ENCODE measurements at regions of chr19 and their contacts with region 1.

Region 1: DNA sequence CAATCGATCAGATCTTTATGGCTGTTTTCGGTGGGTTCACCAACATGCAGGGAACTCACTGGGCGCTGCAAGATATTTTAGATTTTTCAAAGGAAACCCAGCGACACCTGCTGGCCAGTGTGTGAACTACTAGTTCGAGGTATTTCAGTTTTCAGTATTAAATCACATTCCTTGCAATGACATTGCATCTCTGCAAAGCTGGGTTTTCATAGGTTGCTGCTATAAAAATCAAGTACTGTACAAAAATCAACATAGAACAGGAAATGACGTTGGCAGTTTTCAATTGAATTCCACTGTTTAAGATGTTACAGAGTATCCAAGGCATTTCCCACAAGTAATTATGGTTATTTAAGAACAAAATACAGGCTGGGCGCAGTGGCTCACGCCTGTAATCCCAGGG is 17.6 kb downstream of the LIG1 start:
- DNase-seq: peak; percentile 48 to 52
- ATAC-seq: peak in 5 of 8 donors; percentile 47 to 70 (median 62)
- H3K4me3 ChIP-seq: no peak overlapping the region
- H3K27ac ChIP-seq: peak overlapping the region in 2 of 10 donors; percentile 7 to 9
- H3K4me1 ChIP-seq: peaks cover 0 to 3% (median 0%) of the 10 kb centered on the region in 9 donors
- H3K27me3 ChIP-seq: no peaks in the 10 kb centered on the region
- CTCF ChIP-seq: peak; percentile 79 to 90 (median 84)

Region 2: DNA sequence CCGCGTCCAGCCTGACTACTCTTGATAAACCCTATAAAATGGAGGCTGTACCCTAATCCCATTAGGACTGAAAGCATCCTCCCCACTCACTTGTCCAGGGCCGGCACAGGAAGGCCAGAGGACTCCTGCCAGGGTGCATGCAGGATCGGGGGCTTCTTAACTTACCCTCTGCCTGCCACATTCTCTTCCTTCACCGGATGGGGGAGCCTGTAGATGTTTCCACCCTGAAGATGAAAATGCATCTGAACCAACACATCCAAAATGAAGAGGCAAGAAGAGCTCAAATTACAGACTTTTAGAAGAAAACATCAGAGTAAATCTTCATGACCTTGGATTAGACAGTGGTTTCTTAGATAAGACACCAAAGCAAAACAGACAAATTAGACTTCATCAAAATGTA is 611.8 kb before region 1 on chr19:
- intact Hi-C with region 1: no loop called
- DNase-seq: no peak
- ATAC-seq: no peak
- H3K4me3 ChIP-seq: no peak overlapping the region
- H3K27ac ChIP-seq: peak overlapping the region in 1 of 10 donors; percentile 78
- H3K4me1 ChIP-seq: peaks cover 0 to 20% (median 6%) of the 10 kb centered on the region in 9 donors
- H3K27me3 ChIP-seq: peaks cover 9 to 29% (median 15%) of the 10 kb centered on the region in 7 donors
- CTCF ChIP-seq: peak in 4 of 9 donors; percentile 8 to 22 (median 14)

Region 3: DNA sequence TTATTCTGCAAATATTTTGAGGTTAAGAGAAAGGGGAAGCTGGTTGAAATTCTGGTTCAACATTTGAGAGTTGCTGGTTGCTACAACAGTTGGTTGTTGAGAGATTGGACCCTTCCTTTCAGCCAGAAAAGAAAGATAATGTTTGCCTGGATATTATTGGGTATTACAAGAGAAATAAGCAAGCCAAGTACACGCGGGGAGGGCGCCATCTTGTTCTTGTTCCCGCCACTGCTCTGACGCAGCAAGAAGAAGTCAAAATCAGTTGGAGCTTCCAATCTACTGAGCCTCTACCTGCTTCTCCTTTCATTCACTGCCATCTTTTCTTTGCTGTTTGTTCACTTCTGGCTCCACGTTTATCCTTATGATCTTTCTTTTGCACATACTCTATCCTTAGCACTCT is 179.0 kb before region 1 on chr19:
- intact Hi-C with region 1: loop called in 2 of 10 experiments (anchors 5 kb)
- DNase-seq: no peak
- ATAC-seq: no peak
- H3K4me3 ChIP-seq: no peak overlapping the region
- H3K27ac ChIP-seq: no peak overlapping the region
- H3K4me1 ChIP-seq: no peaks in the 10 kb centered on the region
- H3K27me3 ChIP-seq: peaks cover 0 to 48% (median 27%) of the 10 kb centered on the region in 7 donors
- CTCF ChIP-seq: no peak

Region 4: DNA sequence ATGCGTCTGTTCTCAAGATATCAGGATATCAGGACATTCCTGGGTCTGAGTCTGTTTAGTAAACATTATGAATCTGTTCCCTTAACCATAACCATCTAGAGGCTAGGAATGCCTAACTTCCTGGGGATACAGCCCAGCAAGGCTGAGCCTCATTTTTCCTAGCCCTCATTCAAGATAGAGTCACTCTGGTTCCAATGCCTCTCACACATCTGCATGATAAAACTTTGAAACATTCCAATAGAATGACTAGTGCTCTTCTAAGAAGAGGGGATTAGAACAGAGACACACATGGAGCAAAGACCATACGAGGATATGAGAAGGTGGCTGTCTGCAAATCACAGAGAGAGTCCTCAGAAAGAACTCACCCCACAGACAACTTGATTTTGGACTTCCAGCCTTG is 88.0 kb before region 1 on chr19:
- intact Hi-C with region 1: no loop called
- DNase-seq: no peak
- ATAC-seq: no peak
- H3K4me3 ChIP-seq: no peak overlapping the region
- H3K27ac ChIP-seq: no peak overlapping the region
- H3K4me1 ChIP-seq: no peaks in the 10 kb centered on the region
- H3K27me3 ChIP-seq: no peaks in the 10 kb centered on the region
- CTCF ChIP-seq: no peak

Region 5: GRCh38 chr19:48110350-48110966 is 42.1 kb before region 1 on chr19 and contains the start of gene PLA2G4C:
- intact Hi-C with region 1: loop called (anchors 1 to 5 kb)
- DNase-seq: peak; percentile 92 to 95
- ATAC-seq: peak; percentile 93 to 97 (median 96)
- H3K4me3 ChIP-seq: peak within 1 kb of the TSS; percentile 2 to 73 (median 55)
- H3K27ac ChIP-seq: peak within 1 kb of the TSS; percentile 82 to 98 (median 96)
- H3K4me1 ChIP-seq: peaks cover 0 to 40% (median 27%) of the 10 kb centered on the region in 9 donors
- H3K27me3 ChIP-seq: no peaks in the 10 kb centered on the region
- CTCF ChIP-seq: no peak
- total RNA-seq, gene PLA2G4C: 28.1 to 71.2 (median 46.3) TPM

Region 6: GRCh38 chr19:48170038-48170812 is 17.7 kb after region 1 on chr19 and contains the starts of genes LIG1 and ZSWIM9:
- intact Hi-C with region 1: no loop called
- DNase-seq: peak; percentile 91
- ATAC-seq: peak; percentile 97 to 99 (median 98)
- H3K4me3 ChIP-seq: peak within 1 kb of the TSS; percentile 62 to 98 (median 78)
- H3K27ac ChIP-seq: peak within 1 kb of the TSS; percentile 84 to 97 (median 96)
- H3K4me1 ChIP-seq: peaks cover 0 to 16% (median 11%) of the 10 kb centered on the region in 9 donors
- H3K27me3 ChIP-seq: no peaks in the 10 kb centered on the region
- CTCF ChIP-seq: peak in 7 of 9 donors; percentile 8 to 51 (median 21)
- total RNA-seq, gene LIG1: 1.8 to 8.5 (median 3.5) TPM
- total RNA-seq, gene ZSWIM9: 5.5 to 8.5 (median 6.6) TPM

Measured in heart right ventricle (tissue), 16 donors.